Naive thymus-derived CD4-positive, alpha-beta T cell (primary cell): ENCODE measurements at regions of chr11 and their contacts with region 1.

Region 1: DNA sequence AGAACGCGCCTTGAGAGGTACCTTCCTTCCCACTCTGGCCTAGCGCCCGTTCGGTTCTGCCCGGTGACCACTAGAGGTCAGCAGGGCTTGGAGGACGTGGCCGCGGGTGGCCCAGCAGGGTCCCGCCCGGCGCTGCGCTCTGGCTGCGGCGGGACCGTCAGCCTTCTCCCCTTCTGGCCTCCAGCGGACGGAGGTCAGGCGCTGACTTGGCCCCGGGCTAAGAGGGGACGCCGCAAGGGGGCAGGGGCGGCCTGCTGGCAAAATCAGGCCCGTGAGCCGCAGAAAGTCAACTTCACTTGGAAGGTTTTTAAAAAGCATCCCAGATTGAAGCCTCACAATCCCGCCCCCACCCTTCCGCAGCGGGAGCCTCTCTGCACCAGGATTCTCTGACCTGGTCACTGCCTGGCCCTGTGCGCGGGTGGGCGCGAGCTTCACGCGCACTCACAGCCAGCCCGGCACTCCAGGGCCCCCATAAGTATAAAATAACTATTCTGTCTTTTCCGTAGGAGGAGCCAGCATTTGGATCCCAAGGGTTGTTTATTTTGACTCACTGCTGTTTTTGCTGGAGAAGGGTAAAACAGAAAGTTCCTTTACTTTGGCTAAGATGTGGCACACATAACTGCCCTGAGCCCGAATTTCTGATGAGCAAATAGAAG is 23.2 kb upstream of the ZBTB16 start:
- DNase-seq: peak; percentile 16 to 57 (median 42)
- ATAC-seq: peak; percentile 89
- H3K4me3 ChIP-seq: no peak overlapping the region
- H3K4me3 Mint-ChIP-seq: peak overlapping the region in 5 of 10 donors; percentile 11 to 57 (median 44)
- H3K27ac ChIP-seq: no peak overlapping the region
- H3K27ac Mint-ChIP-seq: peak overlapping the region in 1 of 9 donors; percentile 28
- H3K4me1 ChIP-seq: peaks cover 0 to 3% of the 10 kb centered on the region in 2 donors
- H3K4me1 Mint-ChIP-seq: peaks cover 0 to 5% (median 0%) of the 10 kb centered on the region in 7 donors
- H3K27me3 ChIP-seq: no peaks in the 10 kb centered on the region
- H3K27me3 Mint-ChIP-seq: peaks cover 0 to 34% (median 0%) of the 10 kb centered on the region in 5 donors

Region 2: GRCh38 chr11:113896156-113896879 is 140.0 kb before region 1 on chr11:
- CTCF ChIA-PET with region 1: interaction called, 3 read pairs
- POLR2A ChIA-PET with region 1: no interaction called
- intact Hi-C with region 1: loop called in 1 of 2 experiments (anchors 1 kb)
- DNase-seq: peak in 5 of 9 donors; percentile 24 to 42 (median 37)
- ATAC-seq: peak; percentile 80
- H3K4me3 ChIP-seq: no peak overlapping the region
- H3K4me3 Mint-ChIP-seq: no peak overlapping the region
- H3K27ac ChIP-seq: no peak overlapping the region
- H3K27ac Mint-ChIP-seq: no peak overlapping the region
- H3K4me1 ChIP-seq: no peaks in the 10 kb centered on the region
- H3K4me1 Mint-ChIP-seq: peaks cover 0 to 4% (median 0%) of the 10 kb centered on the region in 7 donors
- H3K27me3 ChIP-seq: no peaks in the 10 kb centered on the region
- H3K27me3 Mint-ChIP-seq: peaks cover 0 to 9% (median 0%) of the 10 kb centered on the region in 5 donors

Region 3: DNA sequence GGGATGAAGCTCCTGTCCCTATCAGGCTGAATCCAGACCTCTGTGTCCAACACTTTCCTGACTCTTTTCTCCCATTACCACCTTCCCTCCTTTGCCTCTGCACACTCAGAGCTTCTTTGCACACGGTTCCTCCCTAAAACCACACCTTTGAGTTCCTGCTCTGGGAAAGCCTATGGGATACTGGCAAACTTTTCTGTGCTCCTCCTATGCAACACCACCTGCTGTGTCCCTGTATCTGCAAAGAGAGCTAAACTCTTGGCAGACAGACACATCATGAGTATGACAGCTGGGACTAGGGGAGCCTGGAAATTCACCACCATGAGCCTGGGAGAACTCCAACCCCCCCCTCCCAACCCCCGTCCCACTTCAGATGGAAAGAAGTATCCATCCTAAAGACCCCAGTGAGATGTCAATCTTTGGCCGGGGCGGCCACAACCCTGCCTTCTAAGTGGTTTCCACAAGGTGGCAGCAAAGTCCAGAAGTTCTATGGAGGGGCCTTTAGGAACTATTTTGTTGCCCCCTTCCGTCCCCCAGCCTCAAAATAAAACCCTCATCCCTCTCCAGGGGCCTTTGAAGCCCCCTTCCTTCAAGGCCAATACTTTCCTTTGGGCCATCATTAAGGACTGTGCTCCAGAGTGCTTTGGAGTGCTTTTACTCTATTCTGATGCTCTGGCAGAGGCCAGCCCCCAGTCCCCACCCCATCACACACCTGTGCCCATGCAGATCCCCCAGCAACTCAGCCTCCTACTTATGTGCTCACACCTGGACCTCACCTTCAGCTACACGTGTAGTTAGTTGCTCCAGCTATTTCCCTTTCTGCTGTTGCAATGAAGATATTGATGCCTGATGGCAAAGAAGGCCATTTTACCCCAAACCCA is 42.0 kb before region 1 on chr11:
- CTCF ChIA-PET with region 1: no interaction called
- POLR2A ChIA-PET with region 1: no interaction called
- intact Hi-C with region 1: loop called in 1 of 2 experiments (anchors 1 kb)
- DNase-seq: peak in 6 of 9 donors; percentile 12 to 50 (median 24)
- ATAC-seq: peak; percentile 57
- H3K4me3 ChIP-seq: no peak overlapping the region
- H3K4me3 Mint-ChIP-seq: no peak overlapping the region
- H3K27ac ChIP-seq: no peak overlapping the region
- H3K27ac Mint-ChIP-seq: no peak overlapping the region
- H3K4me1 ChIP-seq: no peaks in the 10 kb centered on the region
- H3K4me1 Mint-ChIP-seq: peaks cover 0 to 12% (median 5%) of the 10 kb centered on the region in 7 donors
- H3K27me3 ChIP-seq: no peaks in the 10 kb centered on the region
- H3K27me3 Mint-ChIP-seq: peaks cover 2 to 43% (median 29%) of the 10 kb centered on the region in 5 donors

Region 4: GRCh38 chr11:114053406-114053805 is 17.1 kb after region 1 on chr11:
- CTCF ChIA-PET with region 1: interaction called, 5 read pairs
- POLR2A ChIA-PET with region 1: interaction called, 3 read pairs
- intact Hi-C with region 1: loop called in 1 of 2 experiments (anchors 2 kb)
- DNase-seq: no peak
- ATAC-seq: no peak
- H3K4me3 ChIP-seq: no peak overlapping the region
- H3K4me3 Mint-ChIP-seq: no peak overlapping the region
- H3K27ac ChIP-seq: no peak overlapping the region
- H3K27ac Mint-ChIP-seq: no peak overlapping the region
- H3K4me1 ChIP-seq: peaks cover 0 to 2% of the 10 kb centered on the region in 2 donors
- H3K4me1 Mint-ChIP-seq: no peaks in the 10 kb centered on the region
- H3K27me3 ChIP-seq: no peaks in the 10 kb centered on the region
- H3K27me3 Mint-ChIP-seq: peaks cover 20 to 71% (median 23%) of the 10 kb centered on the region in 5 donors

Region 5: GRCh38 chr11:114197799-114198500 is 161.7 kb after region 1 on chr11:
- CTCF ChIA-PET with region 1: interaction called, 92 read pairs
- POLR2A ChIA-PET with region 1: no interaction called
- intact Hi-C with region 1: loop called (anchors 1 kb)
- DNase-seq: no peak
- ATAC-seq: no peak
- H3K4me3 ChIP-seq: no peak overlapping the region
- H3K4me3 Mint-ChIP-seq: no peak overlapping the region
- H3K27ac ChIP-seq: no peak overlapping the region
- H3K27ac Mint-ChIP-seq: no peak overlapping the region
- H3K4me1 ChIP-seq: peaks cover 0 to 5% of the 10 kb centered on the region in 2 donors
- H3K4me1 Mint-ChIP-seq: peaks cover 6 to 30% (median 25%) of the 10 kb centered on the region in 7 donors
- H3K27me3 ChIP-seq: no peaks in the 10 kb centered on the region
- H3K27me3 Mint-ChIP-seq: no peaks in the 10 kb centered on the region

Region 6: GRCh38 chr11:114295676-114296604 is 259.7 kb after region 1 on chr11 and contains the start of gene NNMT:
- CTCF ChIA-PET with region 1: no interaction called
- POLR2A ChIA-PET with region 1: no interaction called
- intact Hi-C with region 1: no loop called
- DNase-seq: no peak
- ATAC-seq: no peak
- H3K4me3 ChIP-seq: no peak within 1 kb of the TSS
- H3K4me3 Mint-ChIP-seq: no peak within 1 kb of the TSS
- H3K27ac ChIP-seq: no peak within 1 kb of the TSS
- H3K27ac Mint-ChIP-seq: no peak within 1 kb of the TSS
- H3K4me1 ChIP-seq: no peaks in the 10 kb centered on the region
- H3K4me1 Mint-ChIP-seq: peaks cover 0 to 8% (median 0%) of the 10 kb centered on the region in 7 donors
- H3K27me3 ChIP-seq: no peaks in the 10 kb centered on the region
- H3K27me3 Mint-ChIP-seq: peaks cover 0 to 20% (median 8%) of the 10 kb centered on the region in 5 donors
- total RNA-seq, gene NNMT: not detected